ENCODE measurements at regions of chr3 and their contacts with region 1.

Region 1: GRCh38 chr3:69200384-69201068 is 78.1 kb upstream of the LMOD3 start:
- DNase-seq: peak; percentile 73 to 96
- H3K4me3 ChIP-seq: peak overlapping the region; percentile 83
- H3K27ac ChIP-seq: peak overlapping the region; percentile 97
- H3K4me1 ChIP-seq: peaks cover 39% of the 10 kb centered on the region
- H3K27me3 ChIP-seq: no peaks in the 10 kb centered on the region
- CTCF ChIP-seq: no peak

Region 2: DNA sequence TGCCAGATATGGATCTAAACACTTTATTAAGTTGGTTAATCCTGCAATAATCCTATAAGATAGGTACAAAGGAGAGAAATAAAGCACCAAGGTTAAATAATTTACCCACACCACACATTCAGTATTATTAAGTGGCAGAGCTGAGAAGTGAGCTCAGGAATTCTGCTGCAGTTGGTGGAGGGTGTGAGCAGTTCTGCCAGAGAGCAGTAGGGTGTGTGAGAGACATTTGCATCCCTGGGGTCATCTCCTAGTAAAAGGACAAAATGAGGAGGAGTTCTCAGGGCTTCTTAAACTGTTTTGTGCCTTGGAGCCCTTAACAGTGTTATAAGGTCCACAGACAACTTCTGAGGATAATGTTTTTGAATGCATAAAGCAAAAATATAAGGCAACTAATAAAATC is 752.6 kb before region 1 on chr3:
- CTCF ChIA-PET with region 1: no interaction called
- POLR2A ChIA-PET with region 1: no interaction called
- intact Hi-C with region 1: no loop called
- DNase-seq: no peak
- H3K4me3 ChIP-seq: no peak overlapping the region
- H3K27ac ChIP-seq: no peak overlapping the region
- H3K4me1 ChIP-seq: no peaks in the 10 kb centered on the region
- H3K27me3 ChIP-seq: no peaks in the 10 kb centered on the region
- CTCF ChIP-seq: no peak

Region 3: DNA sequence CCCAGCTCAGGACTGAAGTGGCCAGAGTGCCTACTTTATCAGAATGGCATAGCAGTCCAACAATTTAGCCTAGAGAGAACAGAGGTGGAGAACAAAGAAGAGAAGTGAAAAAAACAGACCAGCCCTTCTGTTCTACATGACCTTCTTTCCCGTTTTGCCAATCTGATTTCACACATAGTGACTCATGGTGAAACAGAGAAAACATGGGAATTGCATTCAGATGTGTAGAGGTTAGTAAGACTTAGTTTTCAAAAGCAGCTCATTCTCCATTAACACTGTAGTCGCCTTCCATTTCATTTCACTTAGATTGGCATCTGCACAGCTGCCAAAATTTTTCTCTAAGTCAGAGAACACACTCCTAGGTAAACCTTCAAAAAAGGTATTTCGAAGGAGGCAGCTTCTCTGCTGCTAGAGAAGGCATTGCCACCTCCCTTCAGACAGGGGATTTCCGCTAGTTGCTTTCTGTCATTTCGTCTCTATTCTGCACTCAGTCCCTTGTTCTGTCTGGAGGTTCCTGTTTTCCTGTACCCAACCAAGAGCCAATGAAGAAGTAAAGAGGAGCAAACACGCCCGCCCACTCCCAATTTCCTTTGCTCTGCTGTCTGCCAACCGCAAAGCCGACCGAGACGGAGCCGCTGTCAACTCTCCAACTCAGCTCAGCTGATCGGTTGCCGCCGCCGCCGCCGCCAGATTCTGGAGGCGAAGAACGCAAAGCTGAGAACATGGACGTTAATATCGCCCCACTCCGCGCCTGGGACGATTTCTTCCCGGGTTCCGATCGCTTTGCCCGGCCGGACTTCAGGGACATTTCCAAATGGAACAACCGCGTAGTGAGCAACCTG is 116.0 kb before region 1 on chr3 and contains the start of gene ARL6IP5:
- CTCF ChIA-PET with region 1: no interaction called
- POLR2A ChIA-PET with region 1: no interaction called
- intact Hi-C with region 1: loop called (anchors 1 kb)
- DNase-seq: peak; percentile 74 to 81
- H3K4me3 ChIP-seq: peak within 1 kb of the TSS; percentile 74
- H3K27ac ChIP-seq: peak within 1 kb of the TSS; percentile 94
- H3K4me1 ChIP-seq: peaks cover 74% of the 10 kb centered on the region
- H3K27me3 ChIP-seq: no peaks in the 10 kb centered on the region
- CTCF ChIP-seq: no peak
- total RNA-seq, gene ARL6IP5: 35.6 and 45.7 TPM in 2 replicates

Region 4: DNA sequence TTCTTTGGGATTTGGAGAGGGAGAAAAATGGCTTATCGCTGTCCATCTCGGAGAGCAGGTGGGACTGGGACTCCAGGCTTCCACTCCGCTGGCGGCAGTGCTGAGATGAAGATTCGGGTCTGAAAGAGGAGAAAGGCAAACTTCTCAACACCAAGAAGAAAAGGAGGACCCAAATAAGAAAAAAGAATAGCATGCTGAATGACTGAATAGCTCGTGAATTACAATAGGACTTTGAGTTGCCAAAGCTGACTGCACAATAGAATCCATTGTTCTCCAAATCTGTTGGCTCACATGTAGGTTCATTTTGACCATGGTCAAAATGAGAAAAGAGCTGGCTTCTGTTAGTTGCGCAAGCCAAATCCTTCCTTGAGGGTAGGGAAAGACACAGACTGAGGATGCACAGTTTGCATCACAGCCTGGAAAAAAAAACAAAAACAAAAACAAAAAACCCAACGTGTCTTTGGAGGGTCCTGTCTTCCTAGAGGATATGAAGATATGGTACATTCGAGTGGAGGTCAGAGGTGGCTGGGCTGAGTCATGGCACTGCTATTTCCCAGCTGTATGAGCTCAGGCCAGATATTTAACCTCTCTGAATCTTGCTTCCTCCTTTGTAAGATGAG is 18.8 kb before region 1 on chr3:
- CTCF ChIA-PET with region 1: interaction called, 9 read pairs
- POLR2A ChIA-PET with region 1: no interaction called
- intact Hi-C with region 1: loop called (anchors 1 kb)
- DNase-seq: peak; percentile 40 to 67
- H3K4me3 ChIP-seq: no peak overlapping the region
- H3K27ac ChIP-seq: peak overlapping the region; percentile 97
- H3K4me1 ChIP-seq: peaks cover 60% of the 10 kb centered on the region
- H3K27me3 ChIP-seq: no peaks in the 10 kb centered on the region
- CTCF ChIP-seq: no peak

Region 5: GRCh38 chr3:69231929-69232440 is 31.5 kb after region 1 on chr3:
- CTCF ChIA-PET with region 1: interaction called, 8 read pairs
- POLR2A ChIA-PET with region 1: interaction called, 10 read pairs
- intact Hi-C with region 1: loop called (anchors 1 kb)
- DNase-seq: peak; percentile 80 to 92
- H3K4me3 ChIP-seq: peak overlapping the region; percentile 35; the same call in 1 of the 2 replicates
- H3K27ac ChIP-seq: peak overlapping the region; percentile 92
- H3K4me1 ChIP-seq: peaks cover 83% of the 10 kb centered on the region
- H3K27me3 ChIP-seq: no peaks in the 10 kb centered on the region
- CTCF ChIP-seq: no peak

Region 6: GRCh38 chr3:69248436-69248835 is 47.9 kb after region 1 on chr3:
- CTCF ChIA-PET with region 1: no interaction called
- POLR2A ChIA-PET with region 1: no interaction called
- intact Hi-C with region 1: no loop called
- DNase-seq: no peak
- H3K4me3 ChIP-seq: no peak overlapping the region
- H3K27ac ChIP-seq: no peak overlapping the region
- H3K4me1 ChIP-seq: peaks cover 3% of the 10 kb centered on the region
- H3K27me3 ChIP-seq: no peaks in the 10 kb centered on the region
- CTCF ChIP-seq: no peak

Region 7: DNA sequence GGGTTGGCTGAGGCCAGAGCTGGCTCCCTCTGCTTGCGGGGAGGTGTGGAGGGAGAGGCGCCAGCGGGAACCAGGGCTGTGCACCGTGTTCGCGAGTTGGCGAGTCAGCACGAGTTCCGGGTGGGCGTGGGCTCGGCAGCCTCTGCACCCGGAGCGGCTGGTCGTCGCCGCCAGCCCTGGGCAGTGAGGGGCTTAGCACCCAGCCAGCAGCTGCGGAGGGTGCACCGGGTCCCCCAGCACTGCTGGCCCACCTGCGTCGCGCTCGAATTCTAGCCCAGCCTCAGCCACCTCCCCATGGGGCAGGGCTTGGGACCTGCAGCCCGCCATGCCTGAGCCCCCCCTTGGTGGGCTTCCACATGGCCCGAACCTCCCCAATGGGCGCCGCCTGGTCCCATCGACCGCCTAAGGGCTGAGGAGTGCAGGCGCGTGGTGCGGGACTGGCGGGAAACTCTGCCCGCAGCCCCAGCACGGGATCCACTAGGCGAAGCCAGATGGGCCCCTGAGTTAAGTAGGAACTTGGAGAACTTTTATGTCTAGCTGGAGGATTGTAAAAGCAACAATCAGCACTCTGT is 59.8 kb after region 1 on chr3:
- CTCF ChIA-PET with region 1: no interaction called
- POLR2A ChIA-PET with region 1: no interaction called
- intact Hi-C with region 1: no loop called
- DNase-seq: no peak
- H3K4me3 ChIP-seq: no peak overlapping the region
- H3K27ac ChIP-seq: no peak overlapping the region
- H3K4me1 ChIP-seq: no peaks in the 10 kb centered on the region
- H3K27me3 ChIP-seq: no peaks in the 10 kb centered on the region
- CTCF ChIP-seq: no peak

Region 8: DNA sequence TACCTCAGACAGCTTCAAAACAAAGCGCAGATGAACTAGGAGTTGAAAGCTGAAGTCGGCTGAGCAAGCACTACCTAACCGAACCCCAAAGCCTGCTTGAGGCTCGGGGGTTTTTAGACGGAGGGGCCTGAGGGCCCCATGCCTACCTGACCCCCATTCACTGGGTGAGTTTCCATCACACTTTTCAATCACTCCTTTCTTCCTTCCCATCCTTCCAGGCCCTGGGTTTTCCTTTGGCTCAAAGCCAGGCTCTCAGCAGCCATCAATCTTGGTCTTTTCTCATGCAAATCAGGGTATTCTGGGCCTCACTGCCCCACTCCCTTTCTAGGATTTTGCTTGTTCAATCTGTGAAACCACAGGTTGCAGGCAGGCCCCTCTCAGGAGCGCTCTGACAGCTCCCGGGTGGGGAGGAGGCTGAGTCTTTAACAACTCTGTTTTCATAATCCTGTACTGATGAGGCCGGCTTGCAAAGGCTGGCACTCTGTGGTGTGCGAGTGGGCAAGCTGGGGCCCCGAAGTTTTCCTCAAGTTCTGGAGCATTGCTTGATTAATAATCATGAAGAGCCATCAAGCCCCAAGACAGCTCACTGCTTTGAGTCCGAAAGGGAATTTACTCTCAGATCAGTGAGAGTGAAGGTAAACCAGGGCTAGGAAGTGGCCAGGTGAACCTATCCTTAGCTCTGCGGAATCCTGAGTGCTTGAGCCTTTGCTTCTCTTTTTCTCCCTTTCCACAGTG is 87.8 kb after region 1 on chr3:
- CTCF ChIA-PET with region 1: no interaction called
- POLR2A ChIA-PET with region 1: interaction called, 3 read pairs
- intact Hi-C with region 1: loop called (anchors 2 kb)
- DNase-seq: peak in 1 of 2 experiments; percentile 29
- H3K4me3 ChIP-seq: no peak overlapping the region
- H3K27ac ChIP-seq: no peak overlapping the region; the same call in 1 of the 2 replicates
- H3K4me1 ChIP-seq: peaks cover 7% of the 10 kb centered on the region; the same call in 1 of the 2 replicates
- H3K27me3 ChIP-seq: no peaks in the 10 kb centered on the region
- CTCF ChIP-seq: no peak

Measured in PC-9 (cell line).